ENCODE measurements at regions of chr1 and their contacts with region 1.

Region 1: GRCh38 chr1:220908757-220909156 is 29.5 kb downstream of the HLX start:
- DNase-seq: no peak
- ATAC-seq: peak; percentile 43 to 85 (median 71)
- H3K4me3 ChIP-seq: no peak overlapping the region
- H3K27ac ChIP-seq: no peak overlapping the region
- H3K4me1 ChIP-seq: no peaks in the 10 kb centered on the region
- H3K27me3 ChIP-seq: no peaks in the 10 kb centered on the region
- CTCF ChIP-seq: peak in 3 of 4 donors; percentile 33 to 44 (median 40)

Region 2: GRCh38 chr1:220680085-220680687 is 228.6 kb before region 1 on chr1:
- intact Hi-C with region 1: no loop called
- DNase-seq: no peak
- ATAC-seq: peak; percentile 85 to 96 (median 90)
- H3K4me3 ChIP-seq: no peak overlapping the region
- H3K27ac ChIP-seq: no peak overlapping the region
- H3K4me1 ChIP-seq: no peaks in the 10 kb centered on the region
- H3K27me3 ChIP-seq: no peaks in the 10 kb centered on the region
- CTCF ChIP-seq: peak; percentile 45 to 76 (median 57)

Region 3: DNA sequence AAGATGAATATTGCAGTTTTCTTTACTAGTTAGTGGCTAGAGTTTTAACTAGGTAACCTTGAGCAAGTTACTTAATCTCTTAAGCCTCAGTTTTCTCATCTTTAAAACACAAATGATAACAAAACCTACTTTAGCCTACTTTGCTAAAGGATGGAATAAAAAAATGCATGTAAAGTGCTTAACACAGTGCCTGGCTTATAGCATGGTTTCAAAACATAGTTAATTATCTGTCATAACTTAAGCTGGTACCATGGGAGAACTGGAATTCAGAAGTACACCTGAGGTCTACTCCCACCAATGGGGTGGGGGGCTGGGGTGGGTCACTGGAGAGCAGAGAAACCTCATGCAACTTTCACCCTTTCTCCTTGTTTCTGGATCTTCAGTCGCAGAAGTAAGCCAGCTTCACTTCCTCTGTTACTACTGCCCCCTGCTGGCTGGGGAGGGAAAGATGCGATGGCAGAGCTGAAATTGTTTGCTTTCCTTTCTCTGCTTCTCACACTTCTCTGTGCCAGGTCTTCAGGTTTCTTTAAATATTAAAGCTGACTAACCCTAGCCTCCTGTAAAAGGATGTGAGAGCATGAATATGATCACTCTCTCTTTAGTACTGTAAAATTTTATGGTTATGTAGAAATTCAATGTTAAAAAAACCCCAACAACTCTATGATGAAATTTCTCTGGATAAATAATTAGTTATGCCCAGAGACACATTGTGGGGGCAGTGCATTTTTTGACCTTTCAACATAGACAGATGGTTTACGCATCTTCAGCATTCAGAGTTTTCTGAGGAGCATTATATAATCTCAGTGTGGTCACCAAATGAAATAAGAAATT is 294.7 kb after region 1 on chr1:
- intact Hi-C with region 1: loop called in 1 of 3 experiments (anchors 10 kb)
- DNase-seq: peak; percentile 66 to 88 (median 81)
- ATAC-seq: peak; percentile 77 to 97 (median 91)
- H3K4me3 ChIP-seq: no peak overlapping the region
- H3K27ac ChIP-seq: peak overlapping the region in 1 of 4 donors; percentile 29
- H3K4me1 ChIP-seq: peaks cover 11 to 19% (median 19%) of the 10 kb centered on the region in 3 donors
- H3K27me3 ChIP-seq: no peaks in the 10 kb centered on the region
- CTCF ChIP-seq: peak; percentile 67 to 88 (median 76)

Region 4: GRCh38 chr1:222455188-222455879 is 1546.6 kb after region 1 on chr1:
- intact Hi-C with region 1: loop called in 1 of 3 experiments (anchors 10 kb)
- DNase-seq: peak; percentile 59 to 88 (median 78)
- ATAC-seq: peak; percentile 88 to 99 (median 98)
- H3K4me3 ChIP-seq: peak overlapping the region in 1 of 4 donors; percentile 10
- H3K27ac ChIP-seq: no peak overlapping the region
- H3K4me1 ChIP-seq: peaks cover 0 to 6% (median 0%) of the 10 kb centered on the region in 3 donors
- H3K27me3 ChIP-seq: no peaks in the 10 kb centered on the region
- CTCF ChIP-seq: peak; percentile 73 to 91 (median 86)

Measured in pancreas (tissue), 10 donors.